Heart right ventricle (tissue), 16 donors: ENCODE measurements at regions of chr4 and their contacts with region 1.

Region 1: DNA sequence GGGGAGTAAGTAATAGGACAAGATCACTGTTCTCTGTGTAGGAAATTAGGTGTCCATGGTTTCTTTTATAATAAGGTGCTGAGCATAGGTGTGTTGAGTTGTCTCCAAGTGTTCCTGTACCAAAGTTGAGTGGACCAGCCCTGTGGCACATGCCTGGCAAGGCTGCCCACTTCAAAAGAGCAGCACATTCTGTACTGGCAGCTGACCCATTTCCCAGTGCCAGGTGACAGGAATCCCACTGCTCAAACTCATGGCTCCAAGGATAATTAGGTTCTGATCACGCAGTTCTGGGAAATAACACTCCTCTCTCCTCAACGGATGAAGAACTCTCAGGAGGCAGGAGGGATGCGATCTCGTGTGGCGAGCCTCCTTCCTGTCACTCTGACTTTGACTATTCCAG is 12.8 kb upstream of the LGI2 start:
- DNase-seq: no peak
- ATAC-seq: peak in 3 of 8 donors; percentile 20 to 39 (median 34)
- H3K4me3 ChIP-seq: no peak overlapping the region
- H3K27ac ChIP-seq: no peak overlapping the region
- H3K4me1 ChIP-seq: peaks cover 0 to 5% (median 0%) of the 10 kb centered on the region in 9 donors
- H3K27me3 ChIP-seq: no peaks in the 10 kb centered on the region
- CTCF ChIP-seq: no peak

Region 2: GRCh38 chr4:25007598-25007997 is 36.0 kb before region 1 on chr4:
- intact Hi-C with region 1: loop called in 1 of 10 experiments (anchors 2 kb)
- DNase-seq: no peak
- ATAC-seq: peak in 5 of 8 donors; percentile 40 to 67 (median 54)
- H3K4me3 ChIP-seq: no peak overlapping the region
- H3K27ac ChIP-seq: no peak overlapping the region
- H3K4me1 ChIP-seq: peaks cover 0 to 11% (median under 1%) of the 10 kb centered on the region in 9 donors
- H3K27me3 ChIP-seq: no peaks in the 10 kb centered on the region
- CTCF ChIP-seq: no peak